ENCODE measurements at regions of chr16 and their contacts with region 1.

Region 1: GRCh38 chr16:79767421-79768275 is 167.1 kb upstream of the MAF start:
- DNase-seq: no peak
- H3K4me3 ChIP-seq: no peak overlapping the region
- CTCF ChIP-seq: no peak
- POLR2A ChIP-seq: no peak

Region 2: DNA sequence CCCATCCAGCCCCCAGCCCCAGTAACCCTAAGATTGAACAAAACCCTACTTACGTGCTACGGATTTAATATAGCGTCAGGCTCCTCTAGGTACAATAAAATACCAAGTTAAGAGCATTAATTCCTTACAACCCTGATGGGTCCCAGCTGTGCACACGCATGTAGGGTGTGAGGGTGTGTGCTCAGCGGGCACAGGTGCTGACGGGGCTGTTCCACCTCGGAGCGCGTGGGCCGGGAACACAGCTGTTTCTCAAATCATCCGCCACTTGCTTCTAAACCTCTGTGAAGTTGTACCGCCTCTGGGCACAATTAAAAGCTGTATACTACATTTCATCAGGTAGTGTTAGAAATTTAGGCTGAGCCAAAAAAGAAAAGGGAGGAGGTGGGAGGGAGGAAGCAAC is 645.7 kb before region 1 on chr16:
- intact Hi-C with region 1: no loop called
- DNase-seq: peak in 1 of 2 donors; percentile 10
- H3K4me3 ChIP-seq: no peak overlapping the region
- CTCF ChIP-seq: no peak
- POLR2A ChIP-seq: no peak

Region 3: DNA sequence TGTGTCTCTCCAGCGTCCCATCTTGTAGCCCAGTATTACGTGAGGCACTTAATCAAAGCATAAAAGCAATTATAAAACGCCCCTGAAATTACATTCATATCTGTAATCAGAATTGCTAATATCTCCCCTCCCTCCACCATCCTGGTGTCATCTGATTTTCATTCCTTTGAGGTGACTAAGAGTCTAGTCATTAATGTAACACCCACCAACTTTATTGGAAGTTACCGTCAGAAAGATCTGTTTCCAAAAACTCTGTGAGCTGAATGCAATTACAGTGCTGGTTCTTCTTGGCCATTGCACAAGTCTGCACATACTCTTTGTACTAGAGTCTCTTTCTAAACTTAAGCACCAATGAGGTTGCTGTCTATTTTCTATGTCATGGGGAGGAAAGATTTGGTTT is 154.6 kb before region 1 on chr16:
- intact Hi-C with region 1: loop called (anchors 10 kb)
- DNase-seq: no peak
- H3K4me3 ChIP-seq: no peak overlapping the region
- CTCF ChIP-seq: no peak
- POLR2A ChIP-seq: no peak

Region 4: GRCh38 chr16:79728039-79728922 is 39.4 kb before region 1 on chr16:
- intact Hi-C with region 1: no loop called
- DNase-seq: no peak
- H3K4me3 ChIP-seq: no peak overlapping the region
- CTCF ChIP-seq: no peak
- POLR2A ChIP-seq: no peak